ENCODE measurements at regions of chr16 and their contacts with region 1.

Region 1: GRCh38 chr16:84186685-84187437 is at the start of gene TAF1C:
- DNase-seq: peak; percentile 97
- ATAC-seq: peak; percentile 86
- H3K4me3 ChIP-seq: peak within 1 kb of the TSS; percentile 87 to 100
- H3K27ac ChIP-seq: peak within 1 kb of the TSS; percentile 49
- H3K4me1 ChIP-seq: peaks cover 9 to 14% of the 10 kb centered on the region in 2 experiments; a peak in 3 of 4 replicates
- H3K27me3 ChIP-seq: no peaks in the 10 kb centered on the region
- CTCF ChIP-seq: peak; percentile 96 to 100 (median 99)
- POLR2A ChIP-seq: peak; percentile 67
- RAD21 ChIP-seq: peak; percentile 99
- total RNA-seq, gene TAF1C: 76.3 TPM

Region 2: GRCh38 chr16:83762141-83762991 is 424.5 kb before region 1 on chr16:
- CTCF ChIA-PET with region 1: no interaction called
- POLR2A ChIA-PET with region 1: no interaction called
- RAD21 ChIA-PET with region 1: no interaction called
- intact Hi-C with region 1: no loop called
- DNase-seq: no peak
- ATAC-seq: no peak
- H3K4me3 ChIP-seq: no peak overlapping the region
- H3K27ac ChIP-seq: no peak overlapping the region
- H3K4me1 ChIP-seq: no peaks in the 10 kb centered on the region
- H3K27me3 ChIP-seq: peaks cover 13% of the 10 kb centered on the region; the same call in 1 of the 2 replicates
- CTCF ChIP-seq: no peak
- POLR2A ChIP-seq: no peak
- RAD21 ChIP-seq: no peak

Region 3: DNA sequence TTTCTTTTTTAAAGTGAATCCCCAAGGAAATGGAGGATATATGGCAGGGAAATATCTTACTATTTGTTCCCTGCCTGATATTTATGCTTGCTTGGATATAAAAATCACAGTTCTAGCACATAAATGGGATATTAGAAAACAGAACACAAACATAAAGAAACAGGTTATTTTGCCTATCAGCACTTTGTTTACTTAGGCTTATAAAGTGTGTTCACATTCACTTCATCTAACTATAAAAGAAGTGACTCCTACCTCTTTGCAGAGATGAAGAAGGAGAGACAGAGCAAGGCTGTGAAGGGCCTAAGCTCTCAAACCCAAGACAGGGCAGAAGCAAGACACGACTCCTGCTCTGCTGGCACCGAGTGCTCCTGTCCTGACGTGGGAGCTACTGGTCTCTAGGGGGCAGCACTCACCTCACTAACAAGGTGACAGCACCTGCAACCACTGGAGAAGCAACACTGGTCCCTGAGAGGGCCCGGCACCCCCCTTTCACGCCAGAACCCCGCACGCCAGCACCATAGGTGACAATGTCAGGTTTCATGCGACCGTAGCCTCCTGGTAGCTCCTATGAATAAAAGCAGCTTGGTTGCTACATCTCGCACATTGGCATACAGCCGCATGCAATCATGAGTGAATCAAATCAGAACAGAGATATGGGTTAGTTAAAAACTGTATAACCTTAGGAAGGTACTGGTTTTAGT is 102.1 kb before region 1 on chr16:
- CTCF ChIA-PET with region 1: interaction called, 20 read pairs
- POLR2A ChIA-PET with region 1: no interaction called
- RAD21 ChIA-PET with region 1: interaction called, 3 to 4 read pairs
- intact Hi-C with region 1: loop called (anchors 1 kb)
- DNase-seq: peak; percentile 64
- ATAC-seq: peak; percentile 97
- H3K4me3 ChIP-seq: no peak overlapping the region
- H3K27ac ChIP-seq: no peak overlapping the region
- H3K4me1 ChIP-seq: no peaks in the 10 kb centered on the region
- H3K27me3 ChIP-seq: no peaks in the 10 kb centered on the region
- CTCF ChIP-seq: peak; percentile 87 to 99 (median 98)
- POLR2A ChIP-seq: no peak
- RAD21 ChIP-seq: peak; percentile 94

Region 4: GRCh38 chr16:84124257-84125073 is 62.4 kb before region 1 on chr16:
- CTCF ChIA-PET with region 1: no interaction called
- POLR2A ChIA-PET with region 1: no interaction called
- RAD21 ChIA-PET with region 1: no interaction called
- intact Hi-C with region 1: no loop called
- DNase-seq: no peak
- ATAC-seq: no peak
- H3K4me3 ChIP-seq: no peak overlapping the region
- H3K27ac ChIP-seq: no peak overlapping the region
- H3K4me1 ChIP-seq: peaks cover 0 to under 1% of the 10 kb centered on the region in 2 experiments; a peak in 1 of 4 replicates
- H3K27me3 ChIP-seq: no peaks in the 10 kb centered on the region
- CTCF ChIP-seq: no peak
- POLR2A ChIP-seq: no peak
- RAD21 ChIP-seq: no peak

Region 5: GRCh38 chr16:84144859-84145639 is 41.8 kb before region 1 on chr16 and contains the starts of genes DNAAF1 and HSDL1:
- CTCF ChIA-PET with region 1: interaction called, 4 read pairs
- POLR2A ChIA-PET with region 1: no interaction called
- RAD21 ChIA-PET with region 1: no interaction called
- intact Hi-C with region 1: loop called (anchors 2 kb)
- DNase-seq: peak; percentile 71
- ATAC-seq: peak; percentile 83
- H3K4me3 ChIP-seq: peak within 1 kb of the TSS; percentile 66 to 93
- H3K27ac ChIP-seq: peak within 1 kb of the TSS; percentile 46
- H3K4me1 ChIP-seq: peaks cover 8 to 21% of the 10 kb centered on the region in 2 experiments; a peak in 2 of 4 replicates
- H3K27me3 ChIP-seq: no peaks in the 10 kb centered on the region
- CTCF ChIP-seq: peak in 1 of 3 experiments; percentile 22; a peak in 1 of 6 replicates
- POLR2A ChIP-seq: peak; percentile 52
- RAD21 ChIP-seq: no peak
- total RNA-seq, gene DNAAF1: 0.30 TPM
- total RNA-seq, gene HSDL1: 35.8 TPM

Region 6: GRCh38 chr16:84175350-84176081 is 11.3 kb before region 1 on chr16:
- CTCF ChIA-PET with region 1: interaction called, 16 read pairs
- POLR2A ChIA-PET with region 1: interaction called, 6 read pairs
- RAD21 ChIA-PET with region 1: no interaction called
- intact Hi-C with region 1: no loop called
- DNase-seq: no peak
- ATAC-seq: peak; percentile 49
- H3K4me3 ChIP-seq: no peak overlapping the region
- H3K27ac ChIP-seq: no peak overlapping the region
- H3K4me1 ChIP-seq: peaks cover 0 to 18% of the 10 kb centered on the region in 2 experiments; a peak in 3 of 4 replicates
- H3K27me3 ChIP-seq: no peaks in the 10 kb centered on the region
- CTCF ChIP-seq: 0 out of 6 replicates have a peak, but pooled peaks of 1 of the 3 experiments have one; percentile 3
- POLR2A ChIP-seq: no peak
- RAD21 ChIP-seq: no peak

Region 7: GRCh38 chr16:84308120-84308519 is 121.3 kb after region 1 on chr16:
- CTCF ChIA-PET with region 1: interaction called, 23 read pairs
- POLR2A ChIA-PET with region 1: no interaction called
- RAD21 ChIA-PET with region 1: no interaction called
- intact Hi-C with region 1: loop called (anchors 5 kb)
- DNase-seq: peak; percentile 63
- ATAC-seq: peak; percentile 89
- H3K4me3 ChIP-seq: no peak overlapping the region
- H3K27ac ChIP-seq: no peak overlapping the region
- H3K4me1 ChIP-seq: peaks cover 6 to 16% of the 10 kb centered on the region in 2 experiments; a peak in 3 of 4 replicates
- H3K27me3 ChIP-seq: no peaks in the 10 kb centered on the region
- CTCF ChIP-seq: peak; percentile 88 to 95 (median 93)
- POLR2A ChIP-seq: no peak
- RAD21 ChIP-seq: peak; percentile 98